Breast epithelium (tissue), 4 donors: ENCODE measurements at regions of chr6 and their contacts with region 1.

Region 1: GRCh38 chr6:21121636-21122136 is 471.9 kb upstream of the SOX4 start:
- DNase-seq: no peak
- H3K4me3 ChIP-seq: no peak overlapping the region
- H3K27ac ChIP-seq: no peak overlapping the region
- H3K4me1 ChIP-seq: no peaks in the 10 kb centered on the region
- H3K27me3 ChIP-seq: no peaks in the 10 kb centered on the region
- CTCF ChIP-seq: no peak
- POLR2A ChIP-seq: no peak

Region 2: DNA sequence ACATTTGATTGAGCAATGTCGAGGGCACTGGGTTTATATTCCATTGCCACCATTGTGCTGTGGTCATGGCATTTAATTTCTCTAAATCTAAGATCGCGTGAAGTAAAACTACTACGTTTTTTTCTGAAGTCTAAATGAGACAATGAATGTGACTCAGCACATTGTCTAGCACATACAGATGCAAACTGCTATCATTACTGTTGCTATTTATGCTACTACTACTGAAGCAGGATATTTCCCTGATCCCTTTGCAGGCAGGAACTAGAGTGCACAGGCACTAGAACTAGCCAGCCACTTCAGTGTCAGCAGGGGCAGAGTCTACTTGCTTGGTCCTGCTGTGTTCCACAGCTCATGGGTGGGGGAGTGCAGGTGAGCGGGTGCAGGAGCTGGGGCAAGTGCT is 137.7 kb before region 1 on chr6:
- intact Hi-C with region 1: no loop called
- DNase-seq: no peak
- H3K4me3 ChIP-seq: no peak overlapping the region
- H3K27ac ChIP-seq: no peak overlapping the region
- H3K4me1 ChIP-seq: no peaks in the 10 kb centered on the region
- H3K27me3 ChIP-seq: no peaks in the 10 kb centered on the region
- CTCF ChIP-seq: no peak
- POLR2A ChIP-seq: no peak

Region 3: GRCh38 chr6:21149470-21149869 is 27.8 kb after region 1 on chr6:
- intact Hi-C with region 1: loop called (anchors 2 kb)
- DNase-seq: no peak
- H3K4me3 ChIP-seq: no peak overlapping the region
- H3K27ac ChIP-seq: no peak overlapping the region
- H3K4me1 ChIP-seq: peaks cover 0 to 8% of the 10 kb centered on the region in 2 donors
- H3K27me3 ChIP-seq: no peaks in the 10 kb centered on the region
- CTCF ChIP-seq: no peak
- POLR2A ChIP-seq: no peak